Activated B cell treated with CpG ODN at 0.5 μM for 24 hours (primary cell): ENCODE measurements at regions of chr9 and their contacts with region 1.

Region 1: DNA sequence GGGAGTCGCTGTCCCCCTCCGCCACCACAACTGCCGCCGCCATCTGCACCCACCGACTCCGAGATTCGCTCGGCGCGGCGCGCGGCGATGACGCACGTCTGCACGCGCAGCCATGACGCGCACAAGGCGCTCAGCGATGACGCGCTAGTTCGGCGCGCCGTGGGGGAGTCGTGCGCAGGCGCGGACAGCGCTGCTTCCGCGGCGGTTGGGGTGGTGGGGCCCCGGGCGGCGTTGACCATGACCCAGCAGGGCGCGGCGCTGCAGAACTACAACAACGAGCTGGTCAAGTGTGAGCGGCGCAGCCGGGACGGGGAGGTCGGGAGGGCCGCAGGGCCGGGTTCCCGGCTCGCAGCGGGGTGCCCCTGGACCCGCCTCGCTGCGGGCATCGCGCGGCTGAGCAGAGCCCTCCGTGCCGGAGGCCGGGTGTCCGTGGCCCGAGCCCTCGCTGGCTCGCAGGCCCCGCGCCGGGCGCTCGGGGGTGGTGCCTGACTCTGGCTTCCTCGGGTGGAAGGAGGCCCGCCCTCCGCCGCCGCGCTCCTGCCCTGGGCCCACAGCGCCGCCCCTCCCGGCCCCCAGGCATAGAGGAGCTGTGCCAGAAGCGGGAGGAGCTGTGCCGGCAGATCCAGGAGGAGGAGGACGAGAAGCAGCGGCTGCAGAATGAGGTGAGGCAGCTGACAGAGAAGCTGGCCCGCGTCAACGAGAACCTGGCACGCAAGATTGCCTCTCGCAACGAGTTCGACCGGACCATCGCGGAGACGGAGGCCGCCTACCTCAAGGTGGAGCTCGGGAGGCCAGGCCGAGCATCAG is at the starts of genes ANAPC2 and SSNA1:
- DNase-seq: peak; percentile 99
- ATAC-seq: peak; percentile 79
- H3K4me3 Mint-ChIP-seq: peak within 1 kb of the TSS; percentile 92
- H3K27ac Mint-ChIP-seq: peak within 1 kb of the TSS; percentile 91
- H3K4me1 Mint-ChIP-seq: peaks cover 36% of the 10 kb centered on the region
- H3K27me3 Mint-ChIP-seq: no peaks in the 10 kb centered on the region
- CTCF ChIP-seq: no peak
- total RNA-seq, gene ANAPC2: 75.7 and 93.9 TPM in 2 replicates
- total RNA-seq, gene SSNA1: 71.9 and 76.8 TPM in 2 replicates

Region 2: DNA sequence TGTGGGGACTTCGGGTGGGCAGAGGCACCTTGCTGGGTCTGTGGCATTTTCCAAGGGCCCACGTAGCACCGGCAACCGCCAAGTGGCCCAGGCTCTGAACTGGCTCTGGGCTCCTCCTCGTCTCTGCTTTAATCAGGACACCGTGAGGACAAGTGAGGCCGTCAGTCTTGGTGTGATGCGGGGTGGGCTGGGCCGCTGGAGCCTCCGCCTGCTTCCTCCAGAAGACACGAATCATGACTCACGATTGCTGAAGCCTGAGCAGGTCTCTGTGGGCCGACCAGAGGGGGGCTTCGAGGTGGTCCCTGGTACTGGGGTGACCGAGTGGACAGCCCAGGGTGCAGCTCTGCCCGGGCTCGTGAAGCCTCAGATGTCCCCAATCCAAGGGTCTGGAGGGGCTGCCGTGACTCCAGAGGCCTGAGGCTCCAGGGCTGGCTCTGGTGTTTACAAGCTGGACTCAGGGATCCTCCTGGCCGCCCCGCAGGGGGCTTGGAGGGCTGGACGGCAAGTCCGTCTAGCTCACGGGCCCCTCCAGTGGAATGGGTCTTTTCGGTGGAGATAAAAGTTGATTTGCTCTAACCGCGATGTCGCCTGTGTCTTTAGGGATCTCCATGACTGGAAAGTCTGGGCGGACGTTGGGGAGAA is 80.0 kb before region 1 on chr9:
- CTCF ChIA-PET with region 1: no interaction called
- POLR2A ChIA-PET with region 1: no interaction called
- intact Hi-C with region 1: no loop called
- DNase-seq: no peak
- ATAC-seq: no peak
- H3K4me3 Mint-ChIP-seq: no peak overlapping the region
- H3K27ac Mint-ChIP-seq: no peak overlapping the region
- H3K4me1 Mint-ChIP-seq: peaks cover 8% of the 10 kb centered on the region
- H3K27me3 Mint-ChIP-seq: no peaks in the 10 kb centered on the region
- CTCF ChIP-seq: no peak

Region 3: DNA sequence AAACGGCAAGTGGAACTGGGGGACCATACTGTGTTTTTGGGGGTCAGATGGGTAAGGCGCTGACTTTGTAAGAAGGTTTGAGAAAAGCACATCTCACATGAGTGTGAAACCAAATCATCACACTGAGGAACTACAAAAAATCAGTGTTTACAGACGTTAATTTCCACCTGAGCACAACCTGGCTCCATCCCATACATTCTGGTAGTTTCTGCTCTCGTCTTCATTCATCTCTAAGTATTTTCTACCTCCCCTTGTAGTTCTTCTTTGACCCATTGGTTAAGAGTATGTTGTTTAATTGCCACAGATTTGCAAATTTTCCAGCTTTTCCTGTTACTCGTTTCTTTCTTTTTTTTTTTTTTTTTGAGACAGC is 65.2 kb before region 1 on chr9:
- CTCF ChIA-PET with region 1: no interaction called
- POLR2A ChIA-PET with region 1: interaction called, 10 read pairs
- intact Hi-C with region 1: loop called (anchors 1 kb)
- DNase-seq: no peak
- ATAC-seq: no peak
- H3K4me3 Mint-ChIP-seq: peak overlapping the region; percentile 39
- H3K27ac Mint-ChIP-seq: peak overlapping the region; percentile 88
- H3K4me1 Mint-ChIP-seq: peaks cover 69% of the 10 kb centered on the region
- H3K27me3 Mint-ChIP-seq: no peaks in the 10 kb centered on the region
- CTCF ChIP-seq: no peak

Region 4: GRCh38 chr9:137138722-137139467 is 49.8 kb before region 1 on chr9 and contains the start of gene GRIN1:
- CTCF ChIA-PET with region 1: no interaction called
- POLR2A ChIA-PET with region 1: no interaction called
- intact Hi-C with region 1: no loop called
- DNase-seq: no peak
- ATAC-seq: peak; percentile 56
- H3K4me3 Mint-ChIP-seq: no peak within 1 kb of the TSS
- H3K27ac Mint-ChIP-seq: no peak within 1 kb of the TSS
- H3K4me1 Mint-ChIP-seq: peaks cover 3% of the 10 kb centered on the region
- H3K27me3 Mint-ChIP-seq: peaks cover 56% of the 10 kb centered on the region
- CTCF ChIP-seq: no peak
- total RNA-seq, gene GRIN1: 0.22 TPM in 1 of 2 replicates, not detected in the other

Region 5: DNA sequence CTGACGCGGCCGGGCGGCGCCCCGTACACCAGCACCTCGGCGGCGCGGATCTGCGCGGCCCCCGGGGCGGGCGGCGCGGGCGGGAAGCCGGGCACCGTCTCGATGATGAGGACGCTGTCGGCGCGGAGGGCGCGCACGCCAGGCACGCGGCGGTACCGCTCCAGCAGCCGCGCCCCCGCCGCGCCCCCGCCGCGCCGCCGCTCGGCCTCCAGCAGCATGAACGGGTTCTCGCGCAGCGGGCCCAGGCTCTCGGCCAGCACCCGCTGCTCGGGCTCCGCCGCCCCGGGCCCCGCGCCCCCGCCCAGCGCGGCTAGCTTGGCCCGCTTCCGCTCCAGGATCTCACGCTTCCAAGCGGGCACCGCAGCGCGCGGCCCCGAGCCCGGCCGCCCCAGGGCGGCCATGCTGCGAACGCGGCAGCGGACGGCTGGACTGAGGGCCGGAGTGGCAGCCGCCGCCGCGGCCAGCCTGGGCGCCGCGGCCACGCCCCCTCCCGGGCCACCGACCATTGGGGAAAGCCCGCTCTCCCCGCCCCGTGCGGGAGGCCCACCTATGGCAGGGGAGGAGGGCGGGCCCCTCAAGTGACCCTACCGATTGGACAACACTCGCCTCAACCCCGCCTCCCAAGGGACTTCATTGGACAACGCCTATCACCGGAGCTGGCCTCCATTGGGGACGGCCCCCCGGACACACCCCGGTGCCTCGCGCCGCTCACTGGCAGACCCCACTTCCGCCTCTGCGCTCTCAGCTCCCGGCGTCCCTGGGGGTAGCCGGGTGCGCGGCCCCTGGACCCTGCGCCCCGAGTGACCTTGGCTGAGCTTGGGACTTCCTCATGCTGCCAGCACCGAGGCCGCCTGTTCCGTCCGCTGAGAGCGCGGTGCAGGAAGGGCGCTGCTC is 11.9 kb after region 1 on chr9 and contains the start of gene TPRN:
- CTCF ChIA-PET with region 1: interaction called, 10 read pairs
- POLR2A ChIA-PET with region 1: interaction called, 49 read pairs
- intact Hi-C with region 1: loop called (anchors 1 kb)
- DNase-seq: peak; percentile 92
- ATAC-seq: peak; percentile 95
- H3K4me3 Mint-ChIP-seq: peak within 1 kb of the TSS; percentile 83
- H3K27ac Mint-ChIP-seq: peak within 1 kb of the TSS; percentile 79
- H3K4me1 Mint-ChIP-seq: peaks cover 39% of the 10 kb centered on the region
- H3K27me3 Mint-ChIP-seq: no peaks in the 10 kb centered on the region
- CTCF ChIP-seq: no peak
- total RNA-seq, gene TPRN: 9.3 and 11.4 TPM in 2 replicates

Region 6: GRCh38 chr9:137206602-137207001 is 17.9 kb after region 1 on chr9:
- CTCF ChIA-PET with region 1: interaction called, 10 read pairs
- POLR2A ChIA-PET with region 1: interaction called, 49 read pairs
- intact Hi-C with region 1: loop called (anchors 1 kb)
- DNase-seq: no peak
- ATAC-seq: no peak
- H3K4me3 Mint-ChIP-seq: peak overlapping the region; percentile 92
- H3K27ac Mint-ChIP-seq: peak overlapping the region; percentile 83
- H3K4me1 Mint-ChIP-seq: peaks cover 45% of the 10 kb centered on the region
- H3K27me3 Mint-ChIP-seq: no peaks in the 10 kb centered on the region
- CTCF ChIP-seq: no peak

Region 7: DNA sequence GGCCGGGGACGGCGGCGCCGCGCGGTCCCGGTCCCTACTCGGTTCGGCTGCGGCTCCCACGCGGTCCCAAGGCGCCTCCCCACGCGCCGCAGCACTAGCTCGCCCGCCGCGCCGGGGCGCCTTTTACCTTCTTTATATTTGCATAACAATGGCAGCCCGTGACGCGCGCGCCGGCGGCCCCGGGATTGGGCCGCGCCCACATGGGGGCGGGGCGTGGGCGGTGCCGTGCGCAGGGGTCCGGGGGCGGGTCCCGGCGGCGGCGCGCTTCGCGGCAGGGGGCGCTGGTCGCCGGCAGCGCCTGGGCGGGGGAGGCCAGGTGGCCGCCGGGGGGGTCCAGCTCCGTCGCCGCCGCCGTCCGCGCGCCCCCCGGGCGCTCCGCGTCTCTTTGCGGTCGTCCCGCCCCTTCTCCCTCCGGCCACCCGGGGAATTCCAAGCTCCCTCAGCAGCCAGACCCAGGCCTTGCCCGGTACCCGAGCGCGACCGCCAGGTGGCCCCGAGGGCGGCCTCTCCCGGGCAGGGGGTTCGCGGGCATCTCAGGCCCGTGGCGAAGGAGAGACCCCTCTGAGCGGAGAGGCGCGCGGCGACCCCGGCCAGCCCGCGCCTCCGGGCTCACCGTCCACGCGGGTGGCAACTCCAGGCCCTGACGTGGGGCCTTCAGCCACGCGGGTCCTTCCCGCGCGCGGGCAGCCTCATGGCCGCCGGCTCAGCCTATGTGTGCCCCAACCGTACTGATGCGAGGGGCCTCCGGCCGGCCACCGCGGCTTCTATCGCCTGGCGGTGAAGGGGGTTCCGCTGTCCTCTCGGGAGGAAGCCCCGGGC is 113.7 kb after region 1 on chr9 and contains the start of gene NRARP:
- CTCF ChIA-PET with region 1: no interaction called
- POLR2A ChIA-PET with region 1: no interaction called
- intact Hi-C with region 1: no loop called
- DNase-seq: peak; percentile 95
- ATAC-seq: peak; percentile 85
- H3K4me3 Mint-ChIP-seq: peak within 1 kb of the TSS; percentile 74
- H3K27ac Mint-ChIP-seq: no peak within 1 kb of the TSS
- H3K4me1 Mint-ChIP-seq: peaks cover 16% of the 10 kb centered on the region
- H3K27me3 Mint-ChIP-seq: peaks cover 10% of the 10 kb centered on the region
- CTCF ChIP-seq: no peak
- total RNA-seq, gene NRARP: 1.9 and 3.0 TPM in 2 replicates

Region 8: DNA sequence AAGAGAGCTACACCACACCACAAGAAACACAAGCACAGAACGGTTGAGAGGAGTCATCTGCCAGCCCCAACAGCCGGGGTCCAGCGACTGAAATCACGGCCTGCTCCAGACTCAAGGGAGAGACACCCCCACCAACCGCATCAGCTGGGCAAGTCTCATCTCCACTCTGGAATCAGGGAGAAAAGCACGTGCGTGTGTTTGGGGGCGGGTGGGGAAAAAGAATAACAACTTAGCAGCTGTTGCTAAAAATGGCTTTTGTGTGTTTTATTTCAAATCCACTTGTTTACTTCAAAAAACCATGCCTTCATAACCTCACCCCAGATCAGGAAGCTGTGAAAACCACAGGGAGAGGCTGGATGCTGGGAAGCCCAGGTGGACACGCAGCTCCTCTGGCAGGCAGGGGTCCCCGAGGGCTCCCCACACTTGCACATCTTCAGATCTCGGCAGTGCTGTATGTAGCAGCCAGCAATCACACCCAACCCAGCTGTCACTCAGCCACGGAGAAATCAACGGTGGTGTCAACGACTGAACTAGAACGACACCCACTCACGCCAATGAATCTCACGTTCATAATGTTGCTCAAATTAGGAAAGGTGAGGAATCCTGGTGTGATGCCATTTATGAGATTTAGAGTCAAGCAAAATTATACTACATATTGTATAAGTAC is 342.5 kb after region 1 on chr9:
- CTCF ChIA-PET with region 1: no interaction called
- POLR2A ChIA-PET with region 1: no interaction called
- intact Hi-C with region 1: no loop called
- DNase-seq: no peak
- ATAC-seq: no peak
- H3K4me3 Mint-ChIP-seq: no peak overlapping the region
- H3K27ac Mint-ChIP-seq: no peak overlapping the region
- H3K4me1 Mint-ChIP-seq: peaks cover 23% of the 10 kb centered on the region
- H3K27me3 Mint-ChIP-seq: no peaks in the 10 kb centered on the region
- CTCF ChIP-seq: no peak